ENCODE measurements at regions of chr4 and their contacts with region 1.

Region 1: GRCh38 chr4:95544113-95545103 is 4.4 kb downstream of the UNC5C start:
- DNase-seq: no peak
- ATAC-seq: peak; percentile 32
- H3K4me3 ChIP-seq: no peak overlapping the region
- H3K27ac ChIP-seq: no peak overlapping the region
- H3K4me1 ChIP-seq: no peaks in the 10 kb centered on the region
- H3K27me3 ChIP-seq: peaks cover 0 to 9% of the 10 kb centered on the region in 2 experiments; a peak in 1 of 4 replicates
- CTCF ChIP-seq: peak in 2 of 3 experiments; percentile 17 to 40; a peak in 1 of 6 replicates
- EP300 ChIP-seq: no peak
- POLR2A ChIP-seq: no peak
- RAD21 ChIP-seq: no peak

Region 2: DNA sequence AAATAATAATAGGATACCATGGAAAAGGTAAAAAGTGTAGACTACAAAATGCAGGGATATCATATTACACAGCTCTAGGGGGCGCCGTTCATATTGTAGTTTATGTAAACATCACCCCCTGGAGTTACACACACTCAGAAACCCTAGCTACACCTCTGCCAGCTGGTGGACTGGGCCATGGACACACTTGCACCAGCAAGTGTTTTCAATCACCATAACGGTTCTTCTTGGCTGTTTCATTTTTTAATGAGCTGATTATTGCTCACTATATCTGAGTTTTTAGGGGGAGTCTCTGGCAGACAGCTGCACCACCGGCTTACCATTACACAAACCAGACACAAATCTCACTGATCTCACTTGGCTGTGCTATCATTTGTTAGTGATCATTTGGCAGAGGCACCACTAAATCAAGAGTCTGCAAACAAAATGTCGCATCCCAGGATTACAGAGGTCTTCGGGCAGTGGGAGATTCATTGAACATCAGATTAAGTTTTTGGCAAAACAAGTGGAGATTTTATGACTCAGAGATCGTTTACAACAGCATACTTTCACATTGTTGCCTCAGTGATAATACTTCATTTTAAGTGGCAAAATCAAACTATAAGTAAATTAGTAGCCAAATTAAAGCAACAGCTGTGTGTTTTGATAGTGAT is 181.4 kb before region 1 on chr4:
- CTCF ChIA-PET with region 1: interaction called, 3 read pairs
- POLR2A ChIA-PET with region 1: no interaction called
- RAD21 ChIA-PET with region 1: no interaction called
- SMC1A ChIA-PET with region 1: no interaction called
- in situ Hi-C with region 1: no loop called
- intact Hi-C with region 1: loop called (anchors 5 kb)
- DNase-seq: no peak
- ATAC-seq: peak; percentile 85
- H3K4me3 ChIP-seq: no peak overlapping the region
- H3K27ac ChIP-seq: no peak overlapping the region
- H3K4me1 ChIP-seq: no peaks in the 10 kb centered on the region
- H3K27me3 ChIP-seq: no peaks in the 10 kb centered on the region
- CTCF ChIP-seq: peak in 1 of 3 experiments; percentile 40; a peak in 2 of 6 replicates
- EP300 ChIP-seq: no peak
- POLR2A ChIP-seq: no peak
- RAD21 ChIP-seq: no peak

Region 3: DNA sequence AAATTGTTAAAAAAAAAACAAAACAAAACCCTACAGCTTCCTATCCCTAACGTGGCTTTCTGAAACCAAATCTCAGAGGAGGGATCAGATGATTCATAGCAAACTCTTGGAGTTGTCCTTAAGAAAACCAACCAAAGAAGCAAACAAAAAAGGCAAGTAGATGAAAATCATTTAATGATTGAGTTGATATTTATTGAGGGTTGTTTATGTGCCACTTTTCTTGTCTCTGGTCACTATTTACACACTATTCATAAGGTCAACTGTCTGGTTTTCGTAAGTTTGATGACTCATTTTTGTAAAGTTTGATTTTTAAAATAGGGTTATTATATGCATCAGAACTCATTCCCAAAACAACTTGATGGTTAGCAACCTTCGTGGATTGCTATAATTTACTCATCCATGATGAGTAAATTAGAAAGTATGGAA is 129.0 kb before region 1 on chr4:
- CTCF ChIA-PET with region 1: no interaction called
- POLR2A ChIA-PET with region 1: no interaction called
- RAD21 ChIA-PET with region 1: no interaction called
- SMC1A ChIA-PET with region 1: no interaction called
- in situ Hi-C with region 1: no loop called
- intact Hi-C with region 1: no loop called
- DNase-seq: no peak
- ATAC-seq: no peak
- H3K4me3 ChIP-seq: no peak overlapping the region
- H3K27ac ChIP-seq: no peak overlapping the region
- H3K4me1 ChIP-seq: no peaks in the 10 kb centered on the region
- H3K27me3 ChIP-seq: no peaks in the 10 kb centered on the region
- CTCF ChIP-seq: no peak
- EP300 ChIP-seq: no peak
- POLR2A ChIP-seq: no peak
- RAD21 ChIP-seq: no peak

Region 4: DNA sequence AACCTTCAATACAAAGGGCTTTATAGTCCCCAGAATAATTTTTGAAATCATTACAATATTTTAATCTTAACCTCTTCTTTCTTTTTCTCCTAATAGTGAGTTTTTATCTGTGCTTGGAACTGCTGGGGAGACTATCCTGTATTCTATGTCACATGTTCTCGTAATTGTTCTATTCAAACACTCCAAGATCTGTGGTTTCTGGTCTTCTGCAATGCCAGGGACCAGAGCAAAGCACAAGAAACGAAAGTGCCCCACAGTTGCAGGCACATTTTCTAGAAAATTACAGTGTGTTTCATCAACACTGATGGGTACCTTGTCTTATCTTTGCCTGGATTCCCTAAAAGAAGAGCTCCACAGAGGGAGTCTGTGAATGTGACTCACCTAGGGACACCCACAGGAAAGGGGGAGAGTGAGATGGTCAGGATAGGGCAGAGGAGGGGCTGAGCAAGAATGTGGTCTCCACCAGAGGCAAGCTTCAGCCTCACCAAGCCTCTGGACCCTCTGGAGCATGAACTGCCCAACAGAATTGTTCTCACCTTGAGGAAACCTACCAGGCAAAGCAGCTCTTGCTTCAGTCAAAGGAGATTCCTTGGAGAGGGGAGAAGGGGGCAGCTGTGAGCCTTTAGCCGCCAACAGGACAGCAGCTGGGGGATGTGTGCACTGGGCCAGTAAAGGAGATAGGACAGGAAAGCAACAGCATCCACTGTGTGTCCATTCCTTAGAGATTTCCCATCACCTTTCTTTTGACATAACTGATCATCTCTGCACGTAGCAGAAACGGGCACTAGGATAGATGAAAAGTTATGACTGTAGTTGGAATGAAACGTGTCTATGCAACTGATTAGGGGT is 21.5 kb before region 1 on chr4:
- CTCF ChIA-PET with region 1: interaction called, 32 read pairs
- POLR2A ChIA-PET with region 1: interaction called, 8 read pairs
- RAD21 ChIA-PET with region 1: interaction called, 15 read pairs
- SMC1A ChIA-PET with region 1: interaction called, 131 read pairs
- in situ Hi-C with region 1: no loop called
- intact Hi-C with region 1: loop called (anchors 2 kb)
- DNase-seq: no peak
- ATAC-seq: peak; percentile 16
- H3K4me3 ChIP-seq: no peak overlapping the region
- H3K27ac ChIP-seq: no peak overlapping the region
- H3K4me1 ChIP-seq: no peaks in the 10 kb centered on the region; the same call in 1 of the 2 replicates
- H3K27me3 ChIP-seq: no peaks in the 10 kb centered on the region
- CTCF ChIP-seq: no peak
- EP300 ChIP-seq: no peak
- POLR2A ChIP-seq: no peak
- RAD21 ChIP-seq: no peak

Region 5: DNA sequence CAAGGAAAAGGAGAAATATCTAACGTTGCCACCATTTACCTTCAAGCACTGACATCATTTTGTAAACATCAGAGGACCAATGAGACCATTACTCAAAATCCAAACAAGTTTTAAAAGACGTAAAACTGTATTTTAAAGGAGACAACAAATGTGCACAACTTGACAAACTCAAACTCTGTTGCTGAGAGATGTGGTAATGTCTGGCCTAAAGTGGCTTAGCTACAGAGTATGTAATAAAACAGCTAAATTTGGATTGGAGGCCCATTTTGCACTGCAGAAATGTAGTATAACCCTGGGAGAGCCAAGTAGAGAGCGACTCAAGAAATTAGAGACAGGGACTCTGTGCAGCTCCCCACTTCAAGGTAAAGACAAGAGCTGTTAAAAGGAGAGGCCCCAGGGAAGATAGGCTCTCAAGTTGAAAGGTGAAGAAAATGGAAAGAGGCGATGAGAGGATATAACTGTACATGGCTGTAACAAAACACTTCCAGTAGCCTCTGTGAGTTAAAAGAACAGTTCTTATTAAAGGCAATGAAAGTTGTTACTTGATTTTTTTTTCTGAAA is 15.9 kb before region 1 on chr4:
- CTCF ChIA-PET with region 1: interaction called, 32 read pairs
- POLR2A ChIA-PET with region 1: interaction called, 8 read pairs
- RAD21 ChIA-PET with region 1: interaction called, 15 read pairs
- SMC1A ChIA-PET with region 1: interaction called, 131 read pairs
- in situ Hi-C with region 1: no loop called
- intact Hi-C with region 1: loop called (anchors 2 kb)
- DNase-seq: no peak
- ATAC-seq: peak; percentile 50
- H3K4me3 ChIP-seq: no peak overlapping the region
- H3K27ac ChIP-seq: no peak overlapping the region
- H3K4me1 ChIP-seq: no peaks in the 10 kb centered on the region; the same call in 1 of the 2 replicates
- H3K27me3 ChIP-seq: no peaks in the 10 kb centered on the region
- CTCF ChIP-seq: no peak
- EP300 ChIP-seq: no peak
- POLR2A ChIP-seq: no peak
- RAD21 ChIP-seq: no peak